ENCODE measurements at regions of chr20 and their contacts with region 1.

Region 1: GRCh38 chr20:57398231-57398821 is 7.1 kb downstream of the RBM38 start:
- DNase-seq: peak; percentile 99
- ATAC-seq: peak; percentile 72
- H3K4me3 ChIP-seq: peak overlapping the region in 4 of 5 experiments; percentile 23 to 56 (median 46)
- H3K4me3 Mint-ChIP-seq: peak overlapping the region; percentile 92
- H3K27ac ChIP-seq: peak overlapping the region; percentile 96 to 97
- H3K27ac Mint-ChIP-seq: peak overlapping the region; percentile 100
- H3K4me1 ChIP-seq: peaks cover 97 to 99% of the 10 kb centered on the region in 2 donors
- H3K4me1 Mint-ChIP-seq: peaks cover 98% of the 10 kb centered on the region
- H3K27me3 ChIP-seq: no peaks in the 10 kb centered on the region
- H3K27me3 Mint-ChIP-seq: no peaks in the 10 kb centered on the region
- CTCF ChIP-seq: no peak

Region 2: DNA sequence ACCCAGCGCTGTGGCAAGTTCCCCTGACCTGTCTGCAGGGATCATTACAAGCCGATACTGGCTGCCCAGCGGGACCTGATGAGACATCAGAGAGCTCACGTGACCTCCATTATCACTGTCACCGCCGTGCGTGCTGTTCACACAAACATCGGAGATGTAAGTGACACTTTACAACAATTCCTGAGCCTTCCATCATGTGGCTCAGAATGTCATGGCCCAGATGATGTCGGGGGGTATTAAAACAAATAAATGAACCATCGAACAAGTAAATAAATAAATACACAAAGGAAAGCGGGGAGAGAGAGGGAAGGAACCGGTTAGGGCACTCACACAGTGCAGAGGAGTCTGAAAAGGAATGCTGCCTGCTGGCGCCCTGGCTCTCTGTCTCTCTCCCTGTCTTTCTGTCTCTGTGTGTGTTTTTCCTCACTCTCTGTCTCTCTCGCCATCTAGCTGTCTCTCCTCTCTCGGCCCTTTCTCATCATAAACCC is 327.0 kb before region 1 on chr20:
- CTCF ChIA-PET with region 1: no interaction called
- POLR2A ChIA-PET with region 1: no interaction called
- intact Hi-C with region 1: no loop called
- DNase-seq: no peak
- ATAC-seq: no peak
- H3K4me3 ChIP-seq: no peak overlapping the region
- H3K4me3 Mint-ChIP-seq: no peak overlapping the region
- H3K27ac ChIP-seq: no peak overlapping the region
- H3K27ac Mint-ChIP-seq: no peak overlapping the region
- H3K4me1 ChIP-seq: no peaks in the 10 kb centered on the region
- H3K4me1 Mint-ChIP-seq: no peaks in the 10 kb centered on the region
- H3K27me3 ChIP-seq: peaks cover 0 to 16% (median 6%) of the 10 kb centered on the region in 4 experiments
- H3K27me3 Mint-ChIP-seq: peaks cover 26% of the 10 kb centered on the region
- CTCF ChIP-seq: no peak

Region 3: DNA sequence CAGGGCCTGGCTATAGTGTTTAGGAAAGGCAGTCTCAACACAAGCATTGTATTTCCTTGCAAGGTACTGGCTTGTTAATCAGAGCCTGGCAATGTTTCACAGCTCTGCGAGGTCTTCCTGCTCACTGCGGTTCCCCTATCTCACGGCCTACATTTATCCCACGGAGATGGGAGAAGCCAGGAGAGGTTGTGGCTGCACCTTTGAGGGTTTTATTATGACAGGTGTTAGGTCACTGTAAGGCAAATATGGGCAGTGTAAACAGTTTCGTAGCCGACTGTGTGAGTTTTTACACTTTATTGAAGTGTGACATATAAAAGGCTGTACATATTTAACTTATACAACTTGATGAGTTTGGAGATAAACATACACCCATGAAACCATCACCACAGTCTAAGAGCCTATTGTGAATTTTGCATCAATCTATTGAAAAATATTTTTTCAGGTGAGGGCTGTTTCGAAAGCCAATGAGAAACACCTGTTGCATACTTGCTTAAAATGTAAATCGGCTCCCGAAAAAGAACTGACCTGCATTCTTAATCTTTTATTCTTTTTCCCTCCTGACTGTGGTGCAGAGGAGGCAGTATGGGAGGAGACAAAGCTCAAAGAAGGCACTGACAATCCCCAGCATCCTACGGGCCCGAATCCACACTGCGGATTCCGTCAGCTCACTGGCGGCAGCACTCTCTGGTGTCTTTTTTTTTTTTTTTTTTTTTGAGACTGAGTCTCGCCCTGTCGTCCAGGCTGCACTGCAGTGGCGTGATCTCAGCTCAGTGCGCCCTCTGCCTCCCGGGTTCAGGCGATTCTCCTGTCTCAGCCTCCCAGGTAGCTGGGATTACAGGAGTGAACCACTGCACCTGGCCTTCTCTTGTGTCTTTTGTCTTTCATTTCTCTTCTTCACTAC is 14.6 kb before region 1 on chr20:
- CTCF ChIA-PET with region 1: interaction called, 69 read pairs
- POLR2A ChIA-PET with region 1: interaction called, 109 read pairs
- intact Hi-C with region 1: loop called (anchors 1 kb)
- DNase-seq: no peak
- ATAC-seq: no peak
- H3K4me3 ChIP-seq: no peak overlapping the region
- H3K4me3 Mint-ChIP-seq: no peak overlapping the region
- H3K27ac ChIP-seq: no peak overlapping the region
- H3K27ac Mint-ChIP-seq: peak overlapping the region; percentile 10
- H3K4me1 ChIP-seq: peaks cover 2 to 8% of the 10 kb centered on the region in 2 donors
- H3K4me1 Mint-ChIP-seq: peaks cover 13% of the 10 kb centered on the region
- H3K27me3 ChIP-seq: no peaks in the 10 kb centered on the region
- H3K27me3 Mint-ChIP-seq: no peaks in the 10 kb centered on the region
- CTCF ChIP-seq: no peak

Region 4: GRCh38 chr20:57450419-57450818 is 52.1 kb after region 1 on chr20:
- CTCF ChIA-PET with region 1: no interaction called
- POLR2A ChIA-PET with region 1: interaction called, 8 read pairs
- intact Hi-C with region 1: loop called (anchors 1 kb)
- DNase-seq: peak; percentile 78
- ATAC-seq: peak; percentile 82
- H3K4me3 ChIP-seq: peak overlapping the region; percentile 15 to 48 (median 36)
- H3K4me3 Mint-ChIP-seq: peak overlapping the region; percentile 86
- H3K27ac ChIP-seq: peak overlapping the region; percentile 50
- H3K27ac Mint-ChIP-seq: peak overlapping the region; percentile 73
- H3K4me1 ChIP-seq: peaks cover 38 to 56% of the 10 kb centered on the region in 2 donors
- H3K4me1 Mint-ChIP-seq: peaks cover 63% of the 10 kb centered on the region
- H3K27me3 ChIP-seq: no peaks in the 10 kb centered on the region
- H3K27me3 Mint-ChIP-seq: no peaks in the 10 kb centered on the region
- CTCF ChIP-seq: no peak

Region 5: DNA sequence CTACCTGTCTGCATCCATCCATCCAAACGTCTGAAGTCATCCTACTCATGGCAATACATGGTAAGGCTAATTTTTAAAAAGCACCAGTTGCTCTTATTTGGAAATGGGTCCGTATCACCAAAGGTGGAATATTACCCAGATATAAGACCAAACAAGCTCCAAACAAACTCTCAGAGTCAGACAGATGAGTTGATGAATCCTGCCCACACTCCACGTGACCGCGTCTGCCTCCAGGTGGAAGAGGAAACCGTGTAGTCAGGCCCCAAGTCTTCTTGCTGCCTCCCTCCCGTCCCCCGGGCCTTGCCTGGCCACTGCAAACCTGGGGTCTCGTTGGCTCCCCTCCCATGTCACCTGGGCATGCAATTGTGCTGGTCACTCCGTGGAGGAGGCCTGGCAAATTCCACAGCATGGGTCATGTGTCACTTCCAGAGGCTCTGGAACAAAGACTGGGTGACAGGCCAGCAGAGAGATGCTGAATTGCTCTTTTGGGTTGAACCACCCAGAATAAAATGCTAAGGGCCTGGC is 94.8 kb after region 1 on chr20:
- CTCF ChIA-PET with region 1: interaction called, 37 read pairs
- POLR2A ChIA-PET with region 1: interaction called, 9 read pairs
- intact Hi-C with region 1: no loop called
- DNase-seq: no peak
- ATAC-seq: no peak
- H3K4me3 ChIP-seq: no peak overlapping the region
- H3K4me3 Mint-ChIP-seq: no peak overlapping the region
- H3K27ac ChIP-seq: no peak overlapping the region
- H3K27ac Mint-ChIP-seq: no peak overlapping the region
- H3K4me1 ChIP-seq: peaks cover 11 to 18% of the 10 kb centered on the region in 2 donors
- H3K4me1 Mint-ChIP-seq: peaks cover 38% of the 10 kb centered on the region
- H3K27me3 ChIP-seq: peaks cover 0 to under 1% (median 0%) of the 10 kb centered on the region in 4 experiments
- H3K27me3 Mint-ChIP-seq: peaks cover 3% of the 10 kb centered on the region
- CTCF ChIP-seq: no peak

Region 6: DNA sequence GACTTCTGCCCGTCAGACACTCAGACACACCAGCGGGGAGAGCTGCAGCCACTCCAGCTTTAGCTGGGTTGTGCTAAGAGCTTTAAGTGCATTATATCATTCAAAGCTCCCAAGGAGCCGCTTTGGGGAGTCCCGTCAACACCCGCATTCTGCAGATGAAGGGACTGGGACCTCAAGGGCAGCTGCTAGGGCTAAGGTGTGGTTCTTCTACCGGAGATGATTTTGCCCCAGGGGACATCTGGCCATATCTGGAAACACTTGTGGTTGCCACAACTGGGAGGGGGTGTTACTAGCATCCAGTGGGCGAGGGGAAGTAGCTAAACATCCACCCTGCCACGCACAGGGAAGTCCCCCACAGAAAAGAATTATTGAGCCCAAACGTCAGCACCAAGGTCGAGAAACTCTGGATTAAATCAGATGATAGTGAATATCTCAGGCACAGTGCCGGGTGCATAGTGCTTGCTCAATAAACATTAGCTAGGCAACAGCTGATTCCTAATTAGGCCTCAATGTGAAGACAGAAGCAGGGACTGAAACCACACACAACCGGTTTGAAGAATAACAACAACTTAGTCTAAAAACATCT is 281.9 kb after region 1 on chr20:
- CTCF ChIA-PET with region 1: interaction called, 3 read pairs
- POLR2A ChIA-PET with region 1: interaction called, 8 read pairs
- intact Hi-C with region 1: loop called (anchors 1 kb)
- DNase-seq: peak; percentile 95
- ATAC-seq: peak; percentile 71
- H3K4me3 ChIP-seq: peak overlapping the region; percentile 3 to 55 (median 25)
- H3K4me3 Mint-ChIP-seq: peak overlapping the region; percentile 86
- H3K27ac ChIP-seq: peak overlapping the region; percentile 88 to 96
- H3K27ac Mint-ChIP-seq: peak overlapping the region; percentile 96
- H3K4me1 ChIP-seq: peaks cover 94 to 100% of the 10 kb centered on the region in 2 donors
- H3K4me1 Mint-ChIP-seq: peaks cover 99% of the 10 kb centered on the region
- H3K27me3 ChIP-seq: no peaks in the 10 kb centered on the region
- H3K27me3 Mint-ChIP-seq: no peaks in the 10 kb centered on the region
- CTCF ChIP-seq: no peak

Region 7: GRCh38 chr20:58150772-58151171 is 752.4 kb after region 1 on chr20:
- CTCF ChIA-PET with region 1: no interaction called
- POLR2A ChIA-PET with region 1: no interaction called
- intact Hi-C with region 1: no loop called
- DNase-seq: no peak
- ATAC-seq: no peak
- H3K4me3 ChIP-seq: no peak overlapping the region
- H3K4me3 Mint-ChIP-seq: no peak overlapping the region
- H3K27ac ChIP-seq: no peak overlapping the region
- H3K27ac Mint-ChIP-seq: no peak overlapping the region
- H3K4me1 ChIP-seq: no peaks in the 10 kb centered on the region
- H3K4me1 Mint-ChIP-seq: peaks cover 2% of the 10 kb centered on the region
- H3K27me3 ChIP-seq: peaks cover 0 to 24% (median 2%) of the 10 kb centered on the region in 4 experiments
- H3K27me3 Mint-ChIP-seq: peaks cover 56% of the 10 kb centered on the region
- CTCF ChIP-seq: no peak

Measured in B cell (primary cell).